Dendritic cell treated with granulocyte-macrophage colony-stimulating factor and Interleukin-4, amounts not matched to agents 40 ng/mL and 50 ng/mL, for 4 days (primary cell): ENCODE measurements at regions of chr18 and their contacts with region 1.

Region 1: GRCh38 chr18:76492669-76493212 is 2.3 kb downstream of the ZNF516 start:
- H3K4me3 Mint-ChIP-seq: peak overlapping the region; percentile 93
- H3K27ac Mint-ChIP-seq: peak overlapping the region; percentile 96
- H3K4me1 Mint-ChIP-seq: peaks cover 62% of the 10 kb centered on the region
- H3K27me3 Mint-ChIP-seq: no peaks in the 10 kb centered on the region

Region 2: GRCh38 chr18:76274468-76275289 is 218.1 kb before region 1 on chr18:
- intact Hi-C with region 1: no loop called
- H3K4me3 Mint-ChIP-seq: no peak overlapping the region
- H3K27ac Mint-ChIP-seq: no peak overlapping the region
- H3K4me1 Mint-ChIP-seq: no peaks in the 10 kb centered on the region
- H3K27me3 Mint-ChIP-seq: peaks cover 10% of the 10 kb centered on the region

Region 3: DNA sequence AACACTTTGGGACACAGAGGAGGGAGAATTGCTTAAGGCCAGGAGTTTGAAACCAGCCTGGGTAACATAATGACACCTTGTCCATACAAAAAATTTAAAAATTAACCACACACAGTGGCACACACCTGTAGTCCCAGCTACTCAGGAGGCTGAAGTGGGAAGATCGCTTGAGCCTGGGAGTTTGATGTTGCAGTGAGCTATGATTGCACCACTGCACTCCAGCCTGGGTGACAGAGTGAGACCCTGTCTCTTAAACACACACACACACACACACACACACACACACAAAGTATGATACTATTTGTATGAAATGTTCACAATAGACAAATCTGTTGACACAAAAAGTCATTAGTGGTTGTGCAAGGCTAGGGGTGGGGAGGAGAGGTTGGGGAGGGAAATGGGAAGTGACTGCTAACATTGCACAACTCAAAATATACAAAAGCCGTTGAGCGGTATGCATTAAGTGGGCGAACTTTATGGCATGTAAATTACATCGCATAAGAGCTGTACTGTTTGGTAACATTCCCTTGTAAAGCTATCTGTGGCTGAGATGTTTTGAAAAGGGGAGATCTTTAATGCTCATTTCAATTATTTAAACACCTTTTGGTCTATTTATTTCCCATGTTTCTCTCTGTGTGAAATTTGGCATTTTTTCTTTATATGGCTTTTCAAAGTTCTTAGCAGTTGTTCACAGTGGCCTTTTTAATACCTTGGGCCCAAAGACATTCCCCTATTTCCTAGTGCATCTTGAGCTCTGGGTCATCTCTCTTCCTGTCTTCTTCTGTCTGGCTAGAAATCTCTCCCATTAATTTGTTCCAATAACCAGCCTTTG is 61.2 kb after region 1 on chr18:
- intact Hi-C with region 1: loop called (anchors 5 kb)
- H3K4me3 Mint-ChIP-seq: peak overlapping the region; percentile 64
- H3K27ac Mint-ChIP-seq: peak overlapping the region; percentile 95
- H3K4me1 Mint-ChIP-seq: peaks cover 56% of the 10 kb centered on the region
- H3K27me3 Mint-ChIP-seq: no peaks in the 10 kb centered on the region

Region 4: GRCh38 chr18:76565238-76566180 is 72.8 kb after region 1 on chr18:
- intact Hi-C with region 1: loop called (anchors 5 kb)
- H3K4me3 Mint-ChIP-seq: peak overlapping the region; percentile 51
- H3K27ac Mint-ChIP-seq: peak overlapping the region; percentile 62
- H3K4me1 Mint-ChIP-seq: peaks cover 71% of the 10 kb centered on the region
- H3K27me3 Mint-ChIP-seq: no peaks in the 10 kb centered on the region

Region 5: GRCh38 chr18:76838182-76838581 is 345.4 kb after region 1 on chr18:
- intact Hi-C with region 1: no loop called
- H3K4me3 Mint-ChIP-seq: no peak overlapping the region
- H3K27ac Mint-ChIP-seq: no peak overlapping the region
- H3K4me1 Mint-ChIP-seq: peaks cover 10% of the 10 kb centered on the region
- H3K27me3 Mint-ChIP-seq: no peaks in the 10 kb centered on the region